ENCODE measurements at regions of chr10 and their contacts with region 1.

Region 1: DNA sequence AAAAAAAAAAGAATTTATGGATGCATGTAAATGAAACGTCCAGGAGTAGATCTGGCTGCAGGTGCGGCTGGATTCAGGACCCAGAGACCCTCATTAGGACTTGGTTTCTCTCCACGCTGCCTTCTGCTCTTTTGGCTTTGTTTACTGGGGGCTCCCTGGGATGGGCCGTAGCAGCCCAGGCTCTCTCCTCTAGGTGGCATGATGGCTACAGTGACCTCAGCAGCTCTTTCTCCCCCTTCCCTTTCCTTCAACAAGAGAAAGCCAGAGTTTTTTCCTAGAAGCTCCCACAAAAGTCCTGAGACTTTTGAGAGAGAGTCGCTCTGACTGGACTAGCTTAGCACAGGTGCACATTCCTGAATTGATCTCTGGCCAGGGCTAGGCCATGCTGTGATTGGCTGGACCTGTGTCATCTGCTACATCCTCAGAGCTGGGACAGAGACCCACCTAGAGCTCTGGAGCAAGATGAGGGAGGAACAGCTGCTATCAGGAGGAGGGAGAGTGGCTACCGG is 67.8 kb upstream of the PDCD4 start:
- DNase-seq: peak; percentile 22 to 45 (median 33)
- ATAC-seq: peak; percentile 92
- H3K4me3 ChIP-seq: no peak overlapping the region
- H3K27ac ChIP-seq: no peak overlapping the region
- H3K4me1 ChIP-seq: peaks cover 0 to 4% of the 10 kb centered on the region in 2 experiments; a peak in 2 of 5 replicates
- H3K27me3 ChIP-seq: no peaks in the 10 kb centered on the region
- CTCF ChIP-seq: peak; percentile 52 to 68 (median 65)
- EP300 ChIP-seq: no peak
- POLR2A ChIP-seq: no peak
- RAD21 ChIP-seq: peak; percentile 55 to 65

Region 2: GRCh38 chr10:110746254-110746826 is 57.5 kb before region 1 on chr10:
- CTCF ChIA-PET with region 1: no interaction called
- POLR2A ChIA-PET with region 1: no interaction called
- in situ Hi-C with region 1: no loop called
- intact Hi-C with region 1: loop called (anchors 2 kb)
- DNase-seq: peak; percentile 45 to 58 (median 48)
- ATAC-seq: peak; percentile 87
- H3K4me3 ChIP-seq: no peak overlapping the region
- H3K27ac ChIP-seq: no peak overlapping the region
- H3K4me1 ChIP-seq: peaks cover 0 to 3% of the 10 kb centered on the region in 2 experiments; a peak in 2 of 5 replicates
- H3K27me3 ChIP-seq: no peaks in the 10 kb centered on the region
- CTCF ChIP-seq: peak; percentile 65 to 68 (median 66)
- EP300 ChIP-seq: no peak
- POLR2A ChIP-seq: no peak
- RAD21 ChIP-seq: peak; percentile 87 to 88